ENCODE measurements at regions of chr17 and their contacts with region 1.

Region 1: DNA sequence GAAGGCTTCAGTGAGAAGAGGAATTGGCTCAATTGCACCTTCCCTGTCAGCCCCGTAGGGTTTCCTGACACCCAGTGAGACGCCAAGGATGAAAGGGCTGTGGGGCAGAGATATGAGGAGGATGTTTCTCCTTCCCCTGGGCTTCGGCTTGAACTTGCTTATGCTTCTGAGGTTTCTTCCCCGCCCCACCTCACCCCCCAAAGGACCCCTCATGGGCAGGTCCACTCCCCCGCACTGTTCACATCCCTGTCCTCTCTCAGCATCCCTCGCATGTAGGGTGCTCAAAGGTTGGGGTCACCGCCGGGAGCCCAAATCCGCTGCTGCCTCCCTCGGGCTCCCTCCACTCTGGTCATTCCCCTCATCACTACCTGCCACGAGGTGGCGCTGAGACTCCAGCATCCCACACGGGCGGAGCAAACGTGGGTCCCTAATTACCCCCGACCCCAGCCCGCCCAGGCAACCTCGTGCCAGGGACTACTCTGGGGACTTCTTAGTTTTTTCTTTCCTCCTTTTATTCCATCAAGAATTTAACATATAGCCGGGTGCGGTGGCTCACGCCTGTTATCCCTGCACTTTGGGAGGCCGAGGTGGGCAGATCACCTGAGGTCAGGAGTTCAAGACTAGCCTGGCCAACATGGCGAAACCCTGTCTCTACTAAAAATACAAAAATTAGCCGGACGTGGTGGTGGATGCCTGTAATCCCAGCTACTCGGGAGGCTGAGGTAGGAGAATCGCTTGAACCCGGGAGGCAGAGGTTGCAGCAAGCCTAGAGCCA is 3.3 kb upstream of the TRARG1 start:
- DNase-seq: peak in 1 of 2 donors; percentile 46
- ATAC-seq: peak; percentile 71 to 77
- H3K4me3 ChIP-seq: no peak overlapping the region
- H3K27ac ChIP-seq: no peak overlapping the region
- H3K4me1 ChIP-seq: no peaks in the 10 kb centered on the region
- H3K27me3 ChIP-seq: peaks cover 5 to 12% (median 8%) of the 10 kb centered on the region in 3 donors
- CTCF ChIP-seq: peak; percentile 62 to 91 (median 80)
- POLR2A ChIP-seq: no peak

Region 2: GRCh38 chr17:1298606-1299005 is 22.5 kb after region 1 on chr17:
- in situ Hi-C with region 1: no loop called
- intact Hi-C with region 1: no loop called
- DNase-seq: no peak
- ATAC-seq: no peak
- H3K4me3 ChIP-seq: no peak overlapping the region
- H3K27ac ChIP-seq: no peak overlapping the region
- H3K4me1 ChIP-seq: no peaks in the 10 kb centered on the region
- H3K27me3 ChIP-seq: peaks cover 14 to 25% (median 22%) of the 10 kb centered on the region in 3 donors
- CTCF ChIP-seq: no peak
- POLR2A ChIP-seq: no peak

Region 3: GRCh38 chr17:1532836-1533602 is 256.9 kb after region 1 on chr17:
- in situ Hi-C with region 1: loop called in 1 of 4 experiments (anchors 25 kb)
- intact Hi-C with region 1: loop called (anchors 5 kb)
- DNase-seq: peak in 1 of 2 donors; percentile 51
- ATAC-seq: peak; percentile 48 to 91
- H3K4me3 ChIP-seq: no peak overlapping the region
- H3K27ac ChIP-seq: peak overlapping the region; percentile 20 to 63 (median 40)
- H3K4me1 ChIP-seq: peaks cover 0 to 8% of the 10 kb centered on the region in 2 donors
- H3K27me3 ChIP-seq: no peaks in the 10 kb centered on the region
- CTCF ChIP-seq: peak in 4 of 5 experiments; percentile 38 to 56 (median 50)
- POLR2A ChIP-seq: no peak

Region 4: DNA sequence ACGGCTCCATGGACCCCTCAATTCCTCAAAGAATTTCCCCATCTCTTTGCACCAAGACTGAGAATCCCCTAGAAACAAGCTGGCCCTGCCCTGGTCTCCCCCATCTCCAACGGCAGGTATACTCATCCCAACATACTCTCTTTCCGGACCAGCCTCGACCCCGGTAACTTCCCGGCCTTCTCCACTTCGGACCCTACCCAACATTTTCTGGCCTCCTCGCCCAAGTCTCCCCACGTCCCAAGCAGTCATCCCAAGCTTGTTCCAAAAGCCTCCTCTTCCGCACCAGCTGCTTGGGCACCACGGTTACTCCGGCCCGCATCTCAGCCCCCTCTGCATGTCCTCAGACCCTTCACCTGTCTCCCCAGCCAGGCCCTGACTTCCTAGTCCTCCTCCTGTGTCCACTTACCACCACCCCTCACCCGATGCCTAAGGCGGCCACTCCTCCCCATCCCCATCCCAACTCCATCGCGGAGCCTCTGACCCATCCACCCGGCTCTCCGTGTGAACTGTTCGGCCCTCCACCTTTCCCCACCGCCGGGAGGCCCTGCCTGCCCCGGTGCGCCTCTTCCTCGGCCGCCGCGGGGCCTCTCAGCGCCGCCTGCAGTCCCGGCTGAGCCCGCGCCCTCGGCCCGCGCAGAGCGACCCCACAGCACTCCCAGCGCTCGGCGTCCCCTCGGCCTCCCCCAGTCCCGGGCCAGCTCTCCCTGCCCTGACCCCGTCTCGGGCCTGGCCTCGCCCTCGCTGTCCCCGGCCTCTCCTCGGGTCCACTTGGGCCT is 285.4 kb after region 1 on chr17:
- in situ Hi-C with region 1: no loop called
- intact Hi-C with region 1: loop called (anchors 2 kb)
- DNase-seq: no peak
- ATAC-seq: peak; percentile 20 to 48
- H3K4me3 ChIP-seq: peak overlapping the region; percentile 64 to 79 (median 69)
- H3K27ac ChIP-seq: peak overlapping the region; percentile 80 to 90 (median 84)
- H3K4me1 ChIP-seq: peaks cover 12 to 27% of the 10 kb centered on the region in 2 donors
- H3K27me3 ChIP-seq: no peaks in the 10 kb centered on the region
- CTCF ChIP-seq: peak; percentile 20 to 37 (median 36)
- POLR2A ChIP-seq: no peak